Ascending aorta (tissue), 2 donors: ENCODE measurements at regions of chr10 and their contacts with region 1.

Region 1: DNA sequence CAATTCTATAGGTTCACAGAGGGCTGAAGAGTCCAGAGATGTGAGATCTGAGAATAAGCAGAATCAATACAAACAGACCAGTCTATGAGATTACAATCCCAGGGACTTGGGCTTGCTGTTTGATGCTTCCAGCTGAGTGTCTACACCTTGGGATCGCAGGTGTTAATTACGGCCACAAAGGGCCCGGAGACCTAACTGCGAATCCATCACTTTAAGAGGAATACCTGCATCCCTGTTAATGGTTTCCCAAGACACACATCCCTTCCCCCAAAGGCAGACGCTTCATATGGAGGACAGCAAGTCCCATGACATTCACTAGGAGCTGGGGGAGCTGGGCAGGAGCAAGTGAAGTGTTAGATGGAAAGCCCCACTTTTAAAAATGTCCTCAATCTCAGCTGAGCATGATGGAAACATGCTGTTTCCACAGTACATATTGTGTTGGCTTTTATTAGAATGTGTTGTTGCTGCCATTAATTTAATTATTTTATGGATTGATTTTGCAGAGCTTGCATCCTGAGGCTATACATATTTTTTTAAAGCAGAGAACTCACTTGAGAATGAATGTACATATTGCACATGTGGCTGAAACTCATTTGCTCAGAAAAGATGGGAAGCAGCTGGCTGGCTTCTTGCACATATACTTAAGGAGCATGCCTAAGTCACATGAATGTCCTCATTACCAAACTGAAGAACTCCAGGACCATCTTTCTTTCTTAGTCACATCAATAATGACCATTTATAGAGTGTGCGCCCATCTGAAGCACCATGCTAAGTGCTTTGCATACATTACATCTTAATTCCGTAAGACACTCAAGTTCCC is 151.3 kb downstream of the NEBL start:
- DNase-seq: no peak
- H3K4me3 ChIP-seq: no peak overlapping the region
- H3K27ac ChIP-seq: peak overlapping the region; percentile 50 to 71
- H3K4me1 ChIP-seq: peaks cover 0 to 39% of the 10 kb centered on the region in 2 donors
- H3K27me3 ChIP-seq: no peaks in the 10 kb centered on the region
- CTCF ChIP-seq: no peak

Region 2: DNA sequence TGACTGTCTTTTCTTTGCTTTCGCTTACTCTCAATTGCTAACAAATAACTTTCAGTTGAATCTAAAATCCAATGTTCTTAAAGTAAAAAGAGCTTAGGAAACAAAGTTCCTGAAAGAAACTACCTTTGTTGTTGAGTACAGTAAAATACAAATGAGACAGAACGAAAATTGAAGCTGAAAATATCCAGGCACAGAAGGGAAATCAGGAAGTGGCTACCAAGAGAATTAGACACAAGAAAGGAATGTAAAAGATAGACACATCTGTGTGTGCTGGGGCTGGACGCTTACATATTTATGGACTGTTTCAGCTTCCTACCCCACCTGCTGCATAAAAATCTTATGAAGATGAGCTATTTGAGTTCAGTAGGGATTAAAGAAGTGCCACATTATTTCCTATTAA is 1091.2 kb before region 1 on chr10:
- intact Hi-C with region 1: loop called (anchors 10 kb)
- DNase-seq: no peak
- H3K4me3 ChIP-seq: no peak overlapping the region
- H3K27ac ChIP-seq: peak overlapping the region in 1 of 2 donors; percentile 21
- H3K4me1 ChIP-seq: peaks cover 0 to 28% of the 10 kb centered on the region in 2 donors
- H3K27me3 ChIP-seq: no peaks in the 10 kb centered on the region
- CTCF ChIP-seq: no peak

Region 3: DNA sequence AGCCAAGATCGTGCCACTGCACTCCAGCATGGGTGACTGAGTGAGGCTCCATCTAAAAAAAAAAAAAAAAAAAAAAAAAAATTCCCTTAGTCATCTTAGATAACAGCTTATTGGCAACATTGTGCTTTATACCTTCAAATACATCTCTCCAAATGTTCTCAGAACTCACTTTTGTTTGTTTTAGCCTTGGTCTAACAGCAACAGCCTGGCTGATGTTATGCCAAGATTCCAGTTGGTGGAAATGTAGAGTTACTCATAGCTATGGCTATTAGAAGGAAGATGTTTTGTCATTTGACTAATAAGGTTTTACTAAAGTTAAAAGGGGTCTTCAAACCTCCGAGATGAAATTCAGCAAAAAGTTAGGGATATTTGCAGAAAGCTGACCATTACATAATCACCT is 330.1 kb before region 1 on chr10:
- intact Hi-C with region 1: loop called (anchors 10 kb)
- DNase-seq: peak in 1 of 2 donors; percentile 64
- H3K4me3 ChIP-seq: no peak overlapping the region
- H3K27ac ChIP-seq: peak overlapping the region; percentile 70 to 75
- H3K4me1 ChIP-seq: no peaks in the 10 kb centered on the region
- H3K27me3 ChIP-seq: no peaks in the 10 kb centered on the region
- CTCF ChIP-seq: no peak

Region 4: GRCh38 chr10:20768843-20769242 is 23.1 kb after region 1 on chr10:
- intact Hi-C with region 1: no loop called
- DNase-seq: no peak
- H3K4me3 ChIP-seq: no peak overlapping the region
- H3K27ac ChIP-seq: no peak overlapping the region
- H3K4me1 ChIP-seq: peaks cover 0 to 14% of the 10 kb centered on the region in 2 donors
- H3K27me3 ChIP-seq: no peaks in the 10 kb centered on the region
- CTCF ChIP-seq: peak; percentile 33 to 73 (median 33)